MCF 10A (cell line): ENCODE measurements at regions of chr14 and their contacts with region 1.

Region 1: DNA sequence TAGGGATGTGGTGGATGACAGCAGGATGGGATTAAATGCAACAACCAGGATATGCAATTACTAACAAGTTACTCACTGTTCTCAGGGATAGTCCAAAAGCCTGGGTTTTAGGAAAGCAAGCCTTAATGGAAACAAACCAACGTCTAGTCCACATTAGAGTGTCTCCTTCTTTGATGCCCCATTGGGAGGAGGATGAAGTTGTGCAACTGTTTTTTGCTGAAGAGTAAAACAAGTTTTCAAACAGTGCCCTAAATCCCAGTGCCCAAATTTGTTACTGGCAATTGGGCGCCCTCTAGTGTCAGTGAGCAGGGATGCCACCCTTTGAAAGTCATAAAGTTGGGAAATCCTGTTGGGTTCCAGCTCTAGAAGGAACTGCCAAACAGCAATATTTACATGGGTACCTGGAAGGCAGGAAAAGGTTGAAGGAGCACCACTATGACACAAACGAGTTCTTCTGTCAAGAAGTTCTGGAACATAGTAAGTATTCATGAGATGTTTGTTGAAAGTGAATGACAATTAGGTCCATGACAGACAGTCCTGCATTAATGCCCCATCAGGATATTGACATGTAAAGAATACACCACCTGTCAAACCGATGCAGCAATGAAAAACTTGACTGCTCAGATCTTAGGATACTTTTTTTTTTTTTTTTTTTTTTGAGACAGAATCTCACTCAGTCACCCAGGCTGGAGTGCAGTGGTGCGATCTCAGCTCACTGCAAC is 11.1 kb upstream of the DPF3 start:
- DNase-seq: peak; percentile 82
- H3K4me3 Mint-ChIP-seq: no peak overlapping the region
- H3K27ac Mint-ChIP-seq: no peak overlapping the region
- H3K4me1 Mint-ChIP-seq: peaks cover 22% of the 10 kb centered on the region
- H3K27me3 Mint-ChIP-seq: no peaks in the 10 kb centered on the region
- CTCF ChIP-seq: peak; percentile 90

Region 2: GRCh38 chr14:72745991-72746980 is 158.7 kb before region 1 on chr14:
- CTCF ChIA-PET with region 1: interaction called, 4 read pairs
- POLR2A ChIA-PET with region 1: no interaction called
- intact Hi-C with region 1: loop called (anchors 5 kb)
- DNase-seq: peak; percentile 61
- H3K4me3 Mint-ChIP-seq: no peak overlapping the region
- H3K27ac Mint-ChIP-seq: peak overlapping the region; percentile 76
- H3K4me1 Mint-ChIP-seq: peaks cover 17% of the 10 kb centered on the region
- H3K27me3 Mint-ChIP-seq: no peaks in the 10 kb centered on the region
- CTCF ChIP-seq: peak; percentile 22